ENCODE measurements at regions of chr6 and their contacts with region 1.

Region 1: DNA sequence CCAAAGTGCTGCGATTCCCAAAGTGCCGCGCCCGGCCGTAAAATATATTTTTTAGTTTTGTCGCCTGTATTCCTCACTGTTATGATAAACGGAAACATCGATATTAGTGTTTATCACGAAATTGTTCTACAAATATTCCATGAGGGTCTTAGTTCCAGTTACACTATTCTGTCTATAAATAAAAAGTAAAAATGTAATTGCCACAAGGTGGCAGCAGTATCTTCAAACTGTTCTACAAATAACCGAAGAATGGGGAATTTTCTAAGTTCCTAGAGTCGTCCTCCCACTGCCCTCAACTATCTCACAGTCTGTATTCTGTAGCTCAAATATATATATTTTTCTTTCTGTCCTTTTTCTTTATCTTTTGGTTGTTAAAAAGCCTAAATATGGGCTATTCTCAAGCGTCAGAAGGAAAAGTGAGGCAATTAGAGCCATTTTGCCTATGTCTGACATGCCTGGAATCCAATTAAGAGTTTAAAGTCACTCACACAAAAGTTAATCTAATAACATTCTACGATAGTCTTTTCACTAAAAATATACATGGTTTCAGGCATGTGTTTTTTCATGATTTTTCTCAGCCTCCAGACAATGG is 14.2 kb upstream of the FAM162B start:
- DNase-seq: peak; percentile 6 to 37
- ATAC-seq: peak in 1 of 2 experiments; percentile 73; a peak in 4 of 6 replicates
- H3K4me3 ChIP-seq: no peak overlapping the region
- H3K27ac ChIP-seq: no peak overlapping the region
- H3K4me1 ChIP-seq: no peaks in the 10 kb centered on the region
- CTCF ChIP-seq: peak; percentile 57
- EP300 ChIP-seq: no peak
- POLR2A ChIP-seq: no peak
- RAD21 ChIP-seq: peak; percentile 31 to 48; a peak in 3 of 5 replicates

Region 2: GRCh38 chr6:116847227-116847626 is 67.6 kb after region 1 on chr6:
- CTCF ChIA-PET with region 1: interaction called, 12 read pairs
- POLR2A ChIA-PET with region 1: no interaction called
- DNase-seq: peak; percentile 4 to 23
- ATAC-seq: peak; percentile 81
- H3K4me3 ChIP-seq: no peak overlapping the region
- H3K27ac ChIP-seq: no peak overlapping the region
- H3K4me1 ChIP-seq: no peaks in the 10 kb centered on the region; the same call in 2 of the 3 replicates
- CTCF ChIP-seq: peak; percentile 39
- EP300 ChIP-seq: no peak
- POLR2A ChIP-seq: no peak
- RAD21 ChIP-seq: peak; percentile 43 to 62; a peak in 4 of 5 replicates